ENCODE measurements at regions of chr19 and their contacts with region 1.

Region 1: GRCh38 chr19:49443366-49444099 is 2.2 kb upstream of the SLC17A7 start:
- DNase-seq: peak; percentile 93 to 95 (median 94)
- H3K4me3 ChIP-seq: peak overlapping the region in 1 of 2 donors; percentile 72
- H3K4me3 Mint-ChIP-seq: peak overlapping the region; percentile 78 to 93 (median 82)
- H3K27ac ChIP-seq: peak overlapping the region; percentile 25
- H3K27ac Mint-ChIP-seq: peak overlapping the region; percentile 88 to 96 (median 93)
- H3K4me1 ChIP-seq: peaks cover 31% of the 10 kb centered on the region
- H3K4me1 Mint-ChIP-seq: peaks cover 18 to 56% (median 34%) of the 10 kb centered on the region in 4 donors
- H3K27me3 ChIP-seq: peaks cover 36% of the 10 kb centered on the region
- H3K27me3 Mint-ChIP-seq: peaks cover 31 to 41% of the 10 kb centered on the region in 2 donors

Region 2: DNA sequence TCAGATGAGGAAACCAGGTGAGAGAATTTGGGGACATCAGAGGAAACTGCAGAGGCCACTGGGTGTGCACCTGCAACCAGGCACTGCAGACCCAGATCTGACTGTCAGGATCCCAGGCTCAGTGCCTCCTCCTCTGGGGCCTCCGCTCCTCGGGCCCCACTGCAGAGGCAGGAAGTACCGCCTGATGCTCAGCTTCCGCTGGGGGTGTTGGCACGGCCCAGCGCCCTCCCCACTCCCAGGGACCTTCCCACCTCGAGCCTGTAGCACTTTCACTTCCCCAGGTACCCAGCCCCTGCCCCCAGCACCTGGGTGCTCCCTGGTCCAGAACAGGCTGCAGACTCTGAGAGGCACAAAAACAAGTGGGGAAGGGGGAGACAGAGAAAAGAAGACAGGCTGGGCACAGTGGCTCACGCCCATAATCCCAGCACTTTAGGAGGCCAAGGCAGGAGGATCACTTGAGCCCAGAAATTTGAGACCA is 109.7 kb before region 1 on chr19:
- CTCF ChIA-PET with region 1: no interaction called
- POLR2A ChIA-PET with region 1: no interaction called
- intact Hi-C with region 1: loop called (anchors 1 kb)
- DNase-seq: peak; percentile 59 to 85 (median 72)
- H3K4me3 ChIP-seq: peak overlapping the region in 1 of 2 donors; percentile 49
- H3K4me3 Mint-ChIP-seq: peak overlapping the region; percentile 85 to 99 (median 87)
- H3K27ac ChIP-seq: peak overlapping the region; percentile 86
- H3K27ac Mint-ChIP-seq: peak overlapping the region; percentile 93 to 98 (median 95)
- H3K4me1 ChIP-seq: peaks cover 83% of the 10 kb centered on the region
- H3K4me1 Mint-ChIP-seq: peaks cover 49 to 88% (median 66%) of the 10 kb centered on the region in 4 donors
- H3K27me3 ChIP-seq: no peaks in the 10 kb centered on the region
- H3K27me3 Mint-ChIP-seq: no peaks in the 10 kb centered on the region

Region 3: GRCh38 chr19:49363268-49364082 is 80.1 kb before region 1 on chr19 and contains the start of gene DKKL1:
- CTCF ChIA-PET with region 1: no interaction called
- POLR2A ChIA-PET with region 1: no interaction called
- intact Hi-C with region 1: loop called (anchors 1 kb)
- DNase-seq: peak; percentile 60 to 74 (median 62)
- H3K4me3 ChIP-seq: peak within 1 kb of the TSS; percentile 30 to 47
- H3K4me3 Mint-ChIP-seq: peak within 1 kb of the TSS in 1 of 8 donors; percentile 50
- H3K27ac ChIP-seq: no peak within 1 kb of the TSS
- H3K27ac Mint-ChIP-seq: no peak within 1 kb of the TSS
- H3K4me1 ChIP-seq: peaks cover 29% of the 10 kb centered on the region
- H3K4me1 Mint-ChIP-seq: peaks cover 4 to 10% (median 8%) of the 10 kb centered on the region in 4 donors
- H3K27me3 ChIP-seq: peaks cover 19% of the 10 kb centered on the region
- H3K27me3 Mint-ChIP-seq: peaks cover 12 to 13% of the 10 kb centered on the region in 2 donors
- total RNA-seq, gene DKKL1: not detected

Region 4: DNA sequence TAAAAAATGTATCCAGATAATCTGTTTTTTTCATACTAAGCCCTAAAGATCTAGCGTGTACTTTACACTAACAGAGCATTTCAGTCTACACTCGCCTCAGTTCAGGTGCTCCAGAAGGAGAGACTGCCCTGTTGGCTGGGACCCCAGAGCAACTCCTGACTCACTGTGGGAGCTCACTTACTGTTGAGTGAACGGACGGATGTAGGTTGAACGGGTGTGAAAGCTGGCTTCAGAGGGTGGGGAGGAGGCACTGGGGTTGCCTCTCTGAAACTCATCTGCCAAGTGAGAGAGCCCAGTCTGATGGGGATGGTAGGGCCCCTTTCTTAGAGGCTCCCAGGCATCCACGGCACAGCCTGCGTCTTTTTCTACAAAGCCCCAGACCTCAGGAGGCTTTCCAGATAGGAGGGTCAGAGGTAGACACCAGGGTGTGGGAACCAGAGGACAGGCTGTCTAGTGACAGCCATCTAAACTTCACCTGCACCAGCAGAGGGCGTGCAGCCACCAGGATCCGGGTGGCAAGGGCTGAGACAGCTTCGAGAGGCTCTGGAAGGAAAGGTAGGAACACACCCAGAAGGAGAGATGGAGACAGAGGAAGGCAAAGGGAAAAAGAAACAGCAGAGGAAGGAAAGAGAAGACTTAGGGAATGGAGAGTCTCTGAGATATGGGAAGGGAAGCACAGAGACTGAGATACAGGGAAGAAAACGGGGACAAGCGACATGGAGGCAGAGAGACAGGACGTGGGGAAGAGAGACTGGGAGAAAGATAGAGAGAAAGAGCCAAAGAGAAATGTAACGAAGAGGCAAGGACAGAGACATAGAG is 51.7 kb before region 1 on chr19:
- CTCF ChIA-PET with region 1: interaction called, 29 read pairs
- POLR2A ChIA-PET with region 1: interaction called, 15 read pairs
- intact Hi-C with region 1: loop called (anchors 1 kb)
- DNase-seq: peak; percentile 76 to 80 (median 78)
- H3K4me3 ChIP-seq: no peak overlapping the region
- H3K4me3 Mint-ChIP-seq: no peak overlapping the region
- H3K27ac ChIP-seq: no peak overlapping the region
- H3K27ac Mint-ChIP-seq: peak overlapping the region in 6 of 7 donors; percentile 9 to 85 (median 60)
- H3K4me1 ChIP-seq: peaks cover 21% of the 10 kb centered on the region
- H3K4me1 Mint-ChIP-seq: peaks cover 8 to 24% (median 11%) of the 10 kb centered on the region in 4 donors
- H3K27me3 ChIP-seq: no peaks in the 10 kb centered on the region
- H3K27me3 Mint-ChIP-seq: no peaks in the 10 kb centered on the region

Region 5: DNA sequence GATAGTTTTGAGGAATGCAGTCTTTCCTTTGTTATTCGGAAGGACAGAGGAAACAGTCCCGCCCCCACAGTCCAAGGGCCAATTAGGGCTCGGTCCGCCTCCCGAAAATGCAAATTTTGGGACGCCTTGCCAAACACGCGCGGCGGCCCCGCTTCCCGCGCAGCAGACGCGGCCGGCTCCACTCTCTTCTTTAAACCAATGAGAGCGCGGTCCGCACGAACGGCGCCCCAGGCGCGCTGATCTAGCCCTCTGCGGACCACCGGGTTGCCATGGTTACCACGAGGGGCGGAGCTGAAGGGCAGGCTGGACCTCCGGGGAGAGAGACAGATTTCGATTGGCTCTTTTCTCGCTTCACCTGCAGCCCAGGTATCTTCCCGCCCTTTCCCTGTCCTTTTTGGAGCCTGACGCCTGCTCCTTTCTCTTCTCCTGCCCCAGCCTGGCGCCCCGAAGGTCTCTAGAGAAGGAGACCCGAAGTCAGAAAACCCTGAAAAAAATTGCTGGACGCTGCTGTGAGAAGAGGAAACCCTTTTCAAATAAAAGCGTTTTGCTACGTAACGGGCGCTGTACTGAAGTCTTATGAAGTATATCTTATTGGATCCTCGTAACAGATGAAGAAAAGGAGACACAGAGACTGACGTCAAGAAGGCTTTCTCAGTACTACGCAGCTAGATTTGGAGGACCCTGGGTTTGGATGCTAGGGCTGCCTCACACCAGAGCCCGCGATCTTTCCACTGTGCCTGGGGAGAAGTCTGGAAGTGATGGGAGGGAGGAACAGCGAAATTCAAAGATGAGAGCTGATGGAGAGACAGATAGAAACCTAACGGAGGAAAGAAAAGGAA is 22.3 kb before region 1 on chr19:
- CTCF ChIA-PET with region 1: no interaction called
- POLR2A ChIA-PET with region 1: interaction called, 3 read pairs
- intact Hi-C with region 1: loop called (anchors 1 kb)
- DNase-seq: peak in 1 of 5 donors; percentile 24
- H3K4me3 ChIP-seq: no peak overlapping the region
- H3K4me3 Mint-ChIP-seq: peak overlapping the region in 7 of 8 donors; percentile 49 to 87 (median 57)
- H3K27ac ChIP-seq: no peak overlapping the region
- H3K27ac Mint-ChIP-seq: peak overlapping the region in 2 of 7 donors; percentile 67 to 79
- H3K4me1 ChIP-seq: peaks cover 41% of the 10 kb centered on the region
- H3K4me1 Mint-ChIP-seq: peaks cover 28 to 65% (median 44%) of the 10 kb centered on the region in 4 donors
- H3K27me3 ChIP-seq: peaks cover 53% of the 10 kb centered on the region
- H3K27me3 Mint-ChIP-seq: peaks cover 60 to 64% of the 10 kb centered on the region in 2 donors